CD8-positive, alpha-beta T cell (primary cell): ENCODE measurements at regions of chr5 and their contacts with region 1.

Region 1: DNA sequence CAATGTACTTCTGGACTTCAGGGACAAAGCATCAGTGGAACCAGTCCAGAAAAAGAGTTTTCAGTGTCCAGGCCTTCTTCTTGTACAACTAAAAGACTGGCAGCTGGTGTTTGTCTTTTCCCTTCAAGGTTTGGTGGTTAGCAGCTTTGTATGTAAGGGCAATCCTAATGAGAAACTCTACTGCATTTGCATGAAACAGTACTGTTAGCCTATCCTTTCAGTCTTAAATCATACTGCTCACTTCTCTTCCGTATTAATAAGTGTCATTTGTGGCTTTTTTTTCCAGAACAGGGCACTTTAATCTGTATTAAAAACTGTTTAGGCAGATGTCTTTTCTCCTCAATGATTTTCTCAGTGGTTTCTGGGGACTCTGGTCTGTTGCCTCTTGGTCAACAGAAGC is 48.9 kb downstream of the FAM174A start:
- DNase-seq: no peak
- ATAC-seq: no peak
- H3K4me3 ChIP-seq: no peak overlapping the region
- H3K4me3 Mint-ChIP-seq: no peak overlapping the region
- H3K27ac ChIP-seq: no peak overlapping the region
- H3K27ac Mint-ChIP-seq: no peak overlapping the region
- H3K4me1 ChIP-seq: no peaks in the 10 kb centered on the region
- H3K4me1 Mint-ChIP-seq: no peaks in the 10 kb centered on the region
- H3K27me3 ChIP-seq: no peaks in the 10 kb centered on the region
- H3K27me3 Mint-ChIP-seq: no peaks in the 10 kb centered on the region
- CTCF ChIP-seq: no peak

Region 2: GRCh38 chr5:100600298-100600994 is 16.4 kb after region 1 on chr5:
- CTCF ChIA-PET with region 1: no interaction called
- POLR2A ChIA-PET with region 1: no interaction called
- intact Hi-C with region 1: loop called in 1 of 2 experiments (anchors 2 kb)
- DNase-seq: no peak
- ATAC-seq: no peak
- H3K4me3 ChIP-seq: no peak overlapping the region
- H3K4me3 Mint-ChIP-seq: no peak overlapping the region
- H3K27ac ChIP-seq: no peak overlapping the region
- H3K27ac Mint-ChIP-seq: no peak overlapping the region
- H3K4me1 ChIP-seq: no peaks in the 10 kb centered on the region
- H3K4me1 Mint-ChIP-seq: no peaks in the 10 kb centered on the region
- H3K27me3 ChIP-seq: no peaks in the 10 kb centered on the region
- H3K27me3 Mint-ChIP-seq: no peaks in the 10 kb centered on the region
- CTCF ChIP-seq: no peak